Right ventricle myocardium inferior (tissue), 1 donor: ENCODE measurements at regions of chr2 and their contacts with region 1.

Region 1: GRCh38 chr2:44981136-44982108 is 27.8 kb downstream of the SIX2 start:
- DNase-seq: peak; percentile 79
- ATAC-seq: peak; percentile 64

Region 2: DNA sequence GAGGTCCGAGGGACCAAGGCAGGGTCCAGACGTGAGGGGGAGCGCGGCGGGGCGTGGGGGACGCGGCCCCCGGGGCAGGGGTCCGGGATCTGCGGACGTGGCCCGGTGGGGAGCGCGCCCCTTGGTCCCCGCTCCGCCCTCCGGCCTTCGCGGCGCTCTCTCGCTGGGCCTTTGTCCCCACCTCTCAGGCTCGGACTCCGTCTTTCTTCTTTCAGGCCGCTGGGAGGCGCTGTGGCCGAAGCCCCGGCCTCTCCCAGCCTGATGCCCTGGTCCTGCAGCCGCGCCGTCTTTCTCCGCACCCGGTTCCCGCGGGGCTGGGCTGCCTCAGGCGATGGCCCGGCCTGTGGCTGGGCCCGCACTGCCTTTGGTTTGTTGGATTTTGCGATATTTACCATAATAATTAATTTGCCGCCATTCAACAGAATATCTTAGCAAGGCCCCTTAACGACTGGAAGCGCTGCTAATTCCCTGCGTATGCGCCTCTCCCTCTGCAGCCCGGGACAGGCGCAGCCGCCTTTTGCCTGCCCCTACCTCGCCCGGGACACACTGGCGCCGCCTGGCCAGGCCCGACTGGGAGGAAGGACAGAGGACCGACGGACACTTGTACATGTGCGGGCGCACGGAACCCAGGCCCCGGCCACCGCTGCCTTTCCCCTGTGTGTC is 29.1 kb before region 1 on chr2:
- intact Hi-C with region 1: no loop called
- DNase-seq: peak; percentile 65
- ATAC-seq: peak; percentile 43

Region 3: GRCh38 chr2:45494269-45494977 is 513.0 kb after region 1 on chr2:
- intact Hi-C with region 1: loop called (anchors 1 kb)
- DNase-seq: no peak
- ATAC-seq: no peak